ENCODE measurements at regions of chr18 and their contacts with region 1.

Region 1: DNA sequence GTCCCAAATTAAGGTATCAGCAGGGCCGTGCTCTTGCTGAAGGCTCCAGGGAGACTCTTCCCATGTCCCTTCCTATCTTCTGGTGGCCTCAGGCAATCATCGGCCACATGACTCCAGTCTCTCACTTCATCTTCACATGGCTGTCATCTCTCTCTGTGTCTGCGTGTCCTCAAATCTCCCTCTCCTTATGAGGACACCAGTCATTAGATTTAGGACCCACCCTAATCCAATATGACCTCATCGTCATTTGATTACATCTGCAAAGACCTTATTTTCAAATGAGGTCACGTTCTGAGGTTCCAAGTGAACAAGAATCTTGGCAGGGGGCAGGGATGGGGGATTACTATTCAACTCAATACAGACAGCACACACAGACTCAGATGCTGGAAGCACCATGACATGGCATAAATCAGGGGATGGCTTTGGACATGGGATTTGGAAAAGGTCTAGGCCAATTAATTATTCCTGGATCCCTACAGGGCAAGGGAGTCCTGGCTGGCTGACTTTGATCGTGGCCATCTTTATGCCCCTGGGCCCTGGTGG is 210.0 kb upstream of the SKOR2 start:
- DNase-seq: no peak
- ATAC-seq: no peak

Region 2: DNA sequence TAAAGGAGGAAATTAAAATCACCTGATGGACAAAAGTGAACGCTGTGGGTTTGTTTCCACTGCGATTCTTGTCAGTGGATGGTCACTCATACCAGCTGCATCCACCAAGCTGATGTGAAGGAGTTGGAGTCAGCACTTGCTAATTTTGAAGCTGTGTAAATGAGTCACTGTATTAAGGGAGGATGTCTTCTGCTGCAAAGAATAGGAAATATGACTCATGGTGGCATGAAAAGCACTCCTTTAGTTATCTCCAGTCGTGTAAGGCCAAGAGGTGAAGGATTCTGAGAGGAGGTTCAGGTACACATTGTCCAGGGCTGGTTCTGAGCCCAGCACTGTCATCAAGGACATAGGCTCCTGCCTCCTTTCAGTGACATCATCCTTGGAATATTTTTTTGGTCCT is 138.3 kb before region 1 on chr18:
- intact Hi-C with region 1: no loop called
- DNase-seq: no peak
- ATAC-seq: peak in 1 of 2 donors; percentile 60

Region 3: DNA sequence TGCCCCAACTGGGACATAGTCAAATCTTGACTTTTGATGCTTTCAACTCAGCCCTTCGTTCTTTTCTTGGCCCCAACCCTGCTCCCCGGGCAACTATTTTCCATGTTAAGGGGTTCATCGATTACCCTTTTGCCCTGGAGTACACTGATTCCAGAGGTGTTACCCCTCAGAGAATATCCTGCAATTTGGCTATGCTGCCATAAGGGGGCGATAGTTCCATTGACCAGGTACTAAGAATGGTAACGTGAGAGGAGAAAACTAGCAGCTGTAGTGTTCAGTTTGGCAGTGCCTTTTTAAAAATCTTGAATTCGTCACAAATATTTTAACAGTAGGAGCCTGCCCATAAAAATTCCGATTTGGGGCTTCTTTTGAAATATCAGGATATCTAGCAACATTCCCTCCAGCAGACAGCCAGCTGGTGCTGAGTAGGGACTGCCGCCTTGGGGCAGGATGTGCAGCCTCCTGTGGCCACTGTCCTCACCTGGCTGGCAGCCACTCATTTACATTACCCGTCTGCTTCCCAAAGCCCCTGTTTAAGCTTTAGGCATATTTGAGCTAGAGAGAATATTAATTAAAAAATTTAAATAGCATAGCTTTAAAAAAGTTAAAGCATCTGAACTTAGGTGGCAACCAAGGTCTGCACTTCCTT is 63.7 kb before region 1 on chr18:
- intact Hi-C with region 1: no loop called
- DNase-seq: no peak
- ATAC-seq: no peak

Region 4: GRCh38 chr18:47413327-47413726 is 48.1 kb before region 1 on chr18:
- intact Hi-C with region 1: loop called in 1 of 2 experiments (anchors 5 kb)
- DNase-seq: no peak
- ATAC-seq: peak in 1 of 2 donors; percentile 59

Region 5: DNA sequence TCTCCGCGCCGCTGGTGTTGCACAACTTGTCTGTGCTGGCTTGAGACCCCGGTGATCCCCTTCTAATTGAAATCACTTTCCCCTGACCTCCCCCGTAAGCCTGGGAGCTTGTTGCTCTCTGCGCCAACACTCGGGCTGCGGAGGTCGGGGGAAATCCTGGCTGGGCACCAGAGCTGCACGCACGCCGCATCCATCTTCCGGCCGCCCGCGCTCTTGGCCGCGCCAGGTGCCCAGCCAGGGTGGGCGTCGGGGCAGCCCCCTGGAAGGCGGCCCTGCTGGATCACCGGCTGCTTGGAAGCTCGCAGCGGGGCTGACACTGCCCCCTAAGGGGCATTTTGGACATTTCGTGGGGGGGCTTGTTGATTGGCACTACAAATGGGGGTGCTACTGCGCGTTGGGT is 70.2 kb after region 1 on chr18:
- intact Hi-C with region 1: no loop called
- DNase-seq: no peak
- ATAC-seq: peak in 1 of 2 donors; percentile 23

Region 6: GRCh38 chr18:47658498-47658897 is 197.0 kb after region 1 on chr18:
- intact Hi-C with region 1: no loop called
- DNase-seq: no peak
- ATAC-seq: no peak